HAP-1 (cell line): ENCODE measurements at regions of chrX and their contacts with region 1.

Region 1: DNA sequence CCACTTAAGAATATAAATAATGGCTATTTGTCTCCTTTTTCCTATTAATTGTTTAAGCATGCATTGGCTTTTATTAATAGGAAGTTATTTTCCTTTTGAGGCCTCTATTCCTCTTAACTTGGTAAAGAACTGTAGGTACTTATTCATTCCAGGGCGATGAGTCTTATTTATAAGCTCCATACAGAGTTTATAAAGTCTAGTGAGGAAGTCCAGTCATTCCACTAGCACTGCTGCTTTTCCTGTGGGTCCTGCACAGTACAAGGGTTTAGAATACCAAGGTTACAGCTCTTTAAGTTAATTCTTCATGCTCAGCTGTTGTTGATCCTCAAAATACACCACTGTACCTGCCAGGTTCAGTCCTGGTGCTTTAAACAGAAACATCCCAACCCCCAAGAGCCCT is 28.5 kb upstream of the WNK3 start:
- DNase-seq: no peak
- H3K4me3 ChIP-seq: no peak overlapping the region
- H3K4me1 ChIP-seq: peaks cover 6% of the 10 kb centered on the region; the same call in 1 of the 2 replicates
- H3K27me3 ChIP-seq: no peaks in the 10 kb centered on the region

Region 2: DNA sequence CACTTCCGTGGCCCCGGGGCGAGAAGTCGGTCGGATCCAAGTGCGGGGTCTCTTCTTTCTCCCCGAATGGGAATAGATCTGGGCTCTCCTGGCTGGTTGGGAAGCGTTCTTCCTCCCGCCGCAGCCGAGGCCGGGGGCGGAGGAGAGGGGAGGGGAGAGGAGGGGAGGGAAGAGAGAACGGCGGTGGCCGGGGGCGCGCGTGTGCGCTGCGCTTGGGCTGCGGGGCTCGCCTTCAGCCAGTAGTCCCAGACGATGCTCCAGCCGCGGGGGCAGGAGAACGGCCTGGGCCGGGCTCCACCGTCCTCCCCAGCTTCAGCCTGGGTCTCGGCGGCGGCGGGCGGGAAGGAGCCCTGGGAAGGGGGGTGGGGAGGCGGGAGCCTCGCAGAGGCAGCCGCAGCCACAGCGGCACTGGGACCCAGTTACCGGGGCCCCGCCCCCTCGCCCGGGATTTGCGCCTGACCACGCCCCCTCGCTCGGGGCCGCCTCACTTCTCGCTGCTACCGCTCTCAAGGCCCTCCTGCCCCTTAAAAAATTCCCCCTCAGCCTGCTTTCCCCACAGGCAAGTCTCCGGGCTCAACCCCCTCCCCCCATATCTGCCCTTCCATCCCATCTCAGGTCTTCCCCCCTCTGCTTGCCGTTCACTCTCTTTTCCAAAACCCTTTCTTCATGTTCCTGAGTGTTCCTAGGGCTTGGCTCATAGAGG is 109.7 kb after region 1 on chrX and contains the start of gene FGD1:
- in situ Hi-C with region 1: loop called (anchors 25 kb)
- DNase-seq: peak; percentile 80 to 92
- H3K4me3 ChIP-seq: peak within 1 kb of the TSS; percentile 56
- H3K4me1 ChIP-seq: peaks cover 19% of the 10 kb centered on the region
- H3K27me3 ChIP-seq: no peaks in the 10 kb centered on the region